ENCODE measurements at regions of chr16 and their contacts with region 1.

Region 1: DNA sequence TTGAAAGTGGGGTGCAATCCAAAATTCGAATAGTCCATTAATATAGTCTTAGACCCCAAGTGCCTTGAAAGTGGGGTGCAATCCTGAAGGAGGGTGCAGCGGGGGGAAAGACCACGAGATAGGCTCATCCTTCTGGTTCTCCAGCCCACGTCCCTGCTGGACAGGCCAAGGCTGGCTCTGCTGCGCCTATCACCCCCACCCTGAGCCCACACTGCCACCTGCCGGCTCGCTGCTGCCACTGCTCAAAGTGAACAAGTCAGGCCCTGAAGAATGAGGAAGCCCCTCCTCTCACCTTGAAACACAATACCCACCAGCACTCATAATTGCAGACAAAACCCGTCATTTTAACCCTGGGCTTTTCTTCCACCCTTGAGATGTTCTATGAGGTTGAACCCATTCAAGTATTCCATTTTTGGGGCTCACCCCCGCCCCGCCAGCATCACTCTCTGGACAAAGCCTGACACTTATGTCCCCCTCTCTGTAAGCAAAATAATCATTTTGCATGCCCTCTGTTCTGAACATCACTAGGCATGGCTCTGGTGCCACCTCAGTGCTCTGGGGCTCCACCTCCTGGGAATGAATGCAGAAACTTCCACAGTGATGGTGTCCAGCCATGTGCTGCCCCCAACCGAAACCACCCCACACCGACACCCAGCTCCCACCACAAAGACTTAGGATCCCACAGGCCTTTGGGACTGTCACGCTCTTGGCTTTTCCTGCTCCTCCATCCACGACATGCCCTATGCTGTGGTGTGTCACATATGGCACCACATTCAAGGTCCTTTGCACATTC is 56.8 kb downstream of the BEAN1 start:
- DNase-seq: peak; percentile 34 to 80 (median 65)
- ATAC-seq: peak; percentile 65 to 81 (median 78)
- H3K4me3 ChIP-seq: no peak overlapping the region
- H3K4me3 Mint-ChIP-seq: no peak overlapping the region
- H3K27ac ChIP-seq: no peak overlapping the region
- H3K27ac Mint-ChIP-seq: no peak overlapping the region
- H3K4me1 ChIP-seq: peaks cover 1 to 19% of the 10 kb centered on the region in 2 experiments
- H3K4me1 Mint-ChIP-seq: peaks cover 11 to 25% (median 14%) of the 10 kb centered on the region in 3 donors
- H3K27me3 ChIP-seq: peaks cover 0 to 7% of the 10 kb centered on the region in 2 experiments
- H3K27me3 Mint-ChIP-seq: no peaks in the 10 kb centered on the region

Region 2: DNA sequence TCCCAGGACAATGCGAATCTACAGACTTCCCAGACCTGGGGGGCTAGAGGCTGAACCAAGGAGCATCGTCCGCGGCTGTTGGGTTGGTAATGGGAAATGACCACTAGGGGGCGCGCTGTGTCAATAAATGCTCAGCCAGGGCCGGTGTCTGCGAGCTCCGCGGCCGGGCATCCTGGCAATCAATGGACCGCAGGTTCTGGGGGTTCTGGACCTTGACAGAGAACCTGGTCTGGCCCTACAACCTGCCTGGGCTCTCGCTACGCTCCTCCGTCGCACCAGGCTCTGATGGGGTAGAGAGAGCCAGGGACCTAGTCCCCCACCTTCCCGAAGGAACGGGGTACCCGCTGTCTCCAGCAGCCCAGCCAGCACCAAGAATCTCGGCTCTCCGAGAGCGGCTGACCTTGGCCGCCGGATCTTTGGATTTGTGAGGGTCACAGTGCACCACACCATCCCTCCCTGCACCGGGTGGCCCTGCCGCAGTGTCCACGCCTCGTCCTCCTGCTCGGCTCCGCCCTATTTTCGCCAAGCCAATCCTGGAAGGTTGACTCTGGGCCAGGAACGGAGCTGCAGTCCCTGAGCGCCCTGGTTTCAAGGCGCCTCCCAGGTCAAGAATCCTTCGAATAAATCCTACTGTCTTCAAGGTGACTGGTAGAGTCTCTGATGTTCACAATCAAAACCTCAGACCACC is 77.2 kb before region 1 on chr16:
- CTCF ChIA-PET with region 1: interaction called, 5 to 14 read pairs
- POLR2A ChIA-PET with region 1: no interaction called
- DNase-seq: peak; percentile 49 to 92 (median 83)
- ATAC-seq: peak; percentile 73 to 79 (median 78)
- H3K4me3 ChIP-seq: peak overlapping the region; percentile 64 to 76
- H3K4me3 Mint-ChIP-seq: peak overlapping the region; percentile 81 to 86 (median 85)
- H3K27ac ChIP-seq: no peak overlapping the region
- H3K27ac Mint-ChIP-seq: peak overlapping the region; percentile 6 to 22
- H3K4me1 ChIP-seq: peaks cover 12 to 25% of the 10 kb centered on the region in 2 experiments
- H3K4me1 Mint-ChIP-seq: peaks cover 25 to 33% (median 31%) of the 10 kb centered on the region in 3 donors
- H3K27me3 ChIP-seq: peaks cover 0 to 27% of the 10 kb centered on the region in 2 experiments
- H3K27me3 Mint-ChIP-seq: peaks cover 0 to 12% of the 10 kb centered on the region in 2 donors